Endothelial cell of umbilical vein (primary cell): ENCODE measurements at regions of chr9 and their contacts with region 1.

Region 1: GRCh38 chr9:98479938-98480847 is 224.7 kb upstream of the TBC1D2 start:
- DNase-seq: no peak
- H3K4me3 ChIP-seq: no peak overlapping the region
- H3K27ac ChIP-seq: no peak overlapping the region
- H3K4me1 ChIP-seq: no peaks in the 10 kb centered on the region
- H3K27me3 ChIP-seq: no peaks in the 10 kb centered on the region
- CTCF ChIP-seq: no peak
- POLR2A ChIP-seq: no peak

Region 2: GRCh38 chr9:97398999-97399758 is 1081.0 kb before region 1 on chr9:
- CTCF ChIA-PET with region 1: no interaction called
- POLR2A ChIA-PET with region 1: no interaction called
- dilution Hi-C with region 1: no loop called
- intact Hi-C with region 1: no loop called
- DNase-seq: peak; percentile 76
- H3K4me3 ChIP-seq: no peak overlapping the region
- H3K27ac ChIP-seq: no peak overlapping the region
- H3K4me1 ChIP-seq: no peaks in the 10 kb centered on the region
- H3K27me3 ChIP-seq: peaks cover 0 to 5% of the 10 kb centered on the region in 2 experiments
- CTCF ChIP-seq: peak; percentile 97 to 99
- POLR2A ChIP-seq: no peak

Region 3: GRCh38 chr9:98558575-98558974 is 78.4 kb after region 1 on chr9:
- CTCF ChIA-PET with region 1: no interaction called
- POLR2A ChIA-PET with region 1: no interaction called
- dilution Hi-C with region 1: no loop called
- intact Hi-C with region 1: loop called (anchors 2 kb)
- DNase-seq: no peak
- H3K4me3 ChIP-seq: no peak overlapping the region
- H3K27ac ChIP-seq: no peak overlapping the region
- H3K4me1 ChIP-seq: no peaks in the 10 kb centered on the region
- H3K27me3 ChIP-seq: no peaks in the 10 kb centered on the region
- CTCF ChIP-seq: no peak
- POLR2A ChIP-seq: no peak

Region 4: GRCh38 chr9:98698856-98699255 is 218.7 kb after region 1 on chr9:
- CTCF ChIA-PET with region 1: no interaction called
- POLR2A ChIA-PET with region 1: no interaction called
- dilution Hi-C with region 1: no loop called
- intact Hi-C with region 1: no loop called
- DNase-seq: no peak
- H3K4me3 ChIP-seq: no peak overlapping the region
- H3K27ac ChIP-seq: no peak overlapping the region
- H3K4me1 ChIP-seq: no peaks in the 10 kb centered on the region
- H3K27me3 ChIP-seq: no peaks in the 10 kb centered on the region
- CTCF ChIP-seq: no peak
- POLR2A ChIP-seq: no peak